ENCODE measurements at regions of chr15 and their contacts with region 1.

Region 1: GRCh38 chr15:34223904-34224596 is 766 bp upstream of the EMC4 start:
- DNase-seq: no peak
- H3K4me3 Mint-ChIP-seq: peak overlapping the region; percentile 87
- H3K27ac Mint-ChIP-seq: peak overlapping the region; percentile 95
- H3K4me1 Mint-ChIP-seq: peaks cover 36% of the 10 kb centered on the region
- H3K27me3 Mint-ChIP-seq: peaks cover 1% of the 10 kb centered on the region

Region 2: GRCh38 chr15:34101366-34102175 is 122.5 kb before region 1 on chr15 and contains the starts of genes EMC7 and PGBD4:
- CTCF ChIA-PET with region 1: interaction called, 4 read pairs
- POLR2A ChIA-PET with region 1: interaction called, 33 read pairs
- DNase-seq: peak; percentile 100
- H3K4me3 Mint-ChIP-seq: peak within 1 kb of the TSS; percentile 96
- H3K27ac Mint-ChIP-seq: peak within 1 kb of the TSS; percentile 90
- H3K4me1 Mint-ChIP-seq: peaks cover 37% of the 10 kb centered on the region
- H3K27me3 Mint-ChIP-seq: no peaks in the 10 kb centered on the region
- total RNA-seq, gene EMC7: 78.7 to 81.8 TPM
- total RNA-seq, gene PGBD4: 3.1 to 3.3 TPM

Region 3: GRCh38 chr15:34297059-34297458 is 73.0 kb after region 1 on chr15:
- CTCF ChIA-PET with region 1: no interaction called
- POLR2A ChIA-PET with region 1: no interaction called
- DNase-seq: no peak
- H3K4me3 Mint-ChIP-seq: no peak overlapping the region
- H3K27ac Mint-ChIP-seq: no peak overlapping the region
- H3K4me1 Mint-ChIP-seq: no peaks in the 10 kb centered on the region
- H3K27me3 Mint-ChIP-seq: no peaks in the 10 kb centered on the region

Measured in activated CD4-positive, alpha-beta memory T cell treated with anti-CD3 and anti-CD28 coated beads, Interleukin-2, amount 10 ng/mL, durations not matched to agents 7 days and 5 days (primary cell).